HEK293 (cell line): ENCODE measurements at regions of chr2 and their contacts with region 1.

Region 1: GRCh38 chr2:119517433-119517832 is 6.8 kb downstream of the SCTR start:
- H3K4me3 ChIP-seq: no peak overlapping the region
- H3K27ac ChIP-seq: no peak overlapping the region
- H3K4me1 ChIP-seq: no peaks in the 10 kb centered on the region
- CTCF ChIP-seq: peak; percentile 83

Region 2: GRCh38 chr2:119494163-119494790 is 23.2 kb before region 1 on chr2:
- CTCF ChIA-PET with region 1: interaction called, 12 read pairs
- POLR2A ChIA-PET with region 1: no interaction called
- H3K4me3 ChIP-seq: no peak overlapping the region
- H3K27ac ChIP-seq: no peak overlapping the region
- H3K4me1 ChIP-seq: no peaks in the 10 kb centered on the region
- CTCF ChIP-seq: no peak

Region 3: GRCh38 chr2:119531292-119531691 is 13.9 kb after region 1 on chr2:
- CTCF ChIA-PET with region 1: interaction called, 12 read pairs
- POLR2A ChIA-PET with region 1: no interaction called
- H3K4me3 ChIP-seq: no peak overlapping the region
- H3K27ac ChIP-seq: no peak overlapping the region
- H3K4me1 ChIP-seq: no peaks in the 10 kb centered on the region; the same call in 1 of the 2 replicates
- CTCF ChIP-seq: no peak